Common myeloid progenitor, CD34-positive (primary cell): ENCODE measurements at regions of chr12 and their contacts with region 1.

Region 1: DNA sequence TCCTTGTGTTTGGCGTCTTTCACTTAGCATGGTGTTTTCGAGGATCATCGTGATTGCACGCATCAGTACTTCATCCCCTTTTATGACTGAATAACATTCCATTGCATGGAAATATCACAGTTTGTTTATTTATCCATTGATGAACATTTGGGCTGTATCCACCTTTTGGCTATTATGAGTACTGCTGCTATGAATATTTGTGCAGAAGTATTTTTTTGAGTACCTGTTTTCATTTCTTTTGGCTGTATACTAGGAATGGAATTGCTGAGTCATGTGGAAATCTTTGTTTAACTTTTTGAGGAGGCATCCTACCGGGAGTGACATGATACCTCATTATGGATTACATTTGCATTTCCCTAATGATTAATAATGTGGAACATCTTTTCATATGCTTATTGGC is 66.4 kb downstream of the WNK1 start:
- DNase-seq: peak in 2 of 3 donors; percentile 18 to 36
- H3K4me3 ChIP-seq: no peak overlapping the region
- H3K27ac ChIP-seq: no peak overlapping the region
- H3K4me1 ChIP-seq: peaks cover 0 to 7% (median 0%) of the 10 kb centered on the region in 4 experiments
- H3K27me3 ChIP-seq: no peaks in the 10 kb centered on the region

Region 2: GRCh38 chr12:650983-651382 is 167.8 kb before region 1 on chr12:
- CTCF ChIA-PET with region 1: interaction called, 27 read pairs
- POLR2A ChIA-PET with region 1: no interaction called
- DNase-seq: peak in 2 of 3 donors; percentile 55 to 62
- H3K4me3 ChIP-seq: no peak overlapping the region
- H3K27ac ChIP-seq: no peak overlapping the region
- H3K4me1 ChIP-seq: peaks cover 2 to 13% (median 4%) of the 10 kb centered on the region in 4 experiments
- H3K27me3 ChIP-seq: no peaks in the 10 kb centered on the region

Region 3: DNA sequence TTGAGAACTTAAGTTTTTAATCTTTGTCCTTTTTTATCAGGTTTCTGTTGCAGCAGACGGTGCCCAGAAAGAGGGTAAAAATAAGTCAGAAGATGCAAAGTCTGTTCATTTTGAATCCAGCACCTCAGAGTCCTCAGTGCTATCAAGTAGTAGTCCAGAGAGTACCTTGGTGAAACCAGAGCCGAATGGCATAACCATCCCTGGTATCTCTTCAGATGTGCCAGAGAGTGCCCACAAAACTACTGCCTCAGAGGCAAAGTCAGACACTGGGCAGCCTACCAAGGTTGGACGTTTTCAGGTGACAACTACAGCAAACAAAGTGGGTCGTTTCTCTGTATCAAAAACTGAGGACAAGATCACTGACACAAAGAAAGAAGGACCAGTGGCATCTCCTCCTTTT is 77.3 kb after region 1 on chr12:
- CTCF ChIA-PET with region 1: no interaction called
- POLR2A ChIA-PET with region 1: no interaction called
- DNase-seq: no peak
- H3K4me3 ChIP-seq: no peak overlapping the region
- H3K27ac ChIP-seq: no peak overlapping the region
- H3K4me1 ChIP-seq: no peaks in the 10 kb centered on the region
- H3K27me3 ChIP-seq: no peaks in the 10 kb centered on the region